Right cardiac atrium (tissue), 5 donors: ENCODE measurements at regions of chr10 and their contacts with region 1.

Region 1: GRCh38 chr10:122814493-122814892 is 31.2 kb downstream of the CUZD1 start:
- DNase-seq: no peak
- ATAC-seq: no peak
- H3K4me3 ChIP-seq: no peak overlapping the region
- H3K27ac ChIP-seq: no peak overlapping the region
- H3K4me1 ChIP-seq: no peaks in the 10 kb centered on the region
- H3K27me3 ChIP-seq: peaks cover 1% of the 10 kb centered on the region

Region 2: GRCh38 chr10:122665329-122665860 is 149.1 kb before region 1 on chr10:
- intact Hi-C with region 1: no loop called
- DNase-seq: no peak
- ATAC-seq: no peak
- H3K4me3 ChIP-seq: no peak overlapping the region
- H3K27ac ChIP-seq: no peak overlapping the region
- H3K4me1 ChIP-seq: no peaks in the 10 kb centered on the region
- H3K27me3 ChIP-seq: no peaks in the 10 kb centered on the region

Region 3: DNA sequence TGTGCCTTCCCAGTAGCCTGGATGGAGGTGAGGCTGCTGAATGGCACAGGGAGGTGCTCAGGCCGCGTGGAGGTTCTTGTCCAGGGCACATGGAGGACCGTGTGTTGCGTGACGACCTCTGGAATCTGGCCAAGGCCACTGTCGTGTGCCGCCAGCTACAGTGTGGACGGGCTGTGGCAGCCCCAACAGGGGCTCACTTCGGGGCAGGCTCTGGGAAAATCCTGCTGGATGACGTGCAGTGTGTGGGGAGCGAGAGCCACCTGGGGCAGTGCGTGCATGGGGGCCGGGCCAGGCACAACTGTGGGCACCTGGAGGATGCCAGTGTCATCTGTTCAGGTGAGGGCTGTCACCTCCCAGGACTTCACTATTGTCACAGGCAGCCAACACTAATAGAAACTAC is 64.6 kb before region 1 on chr10:
- intact Hi-C with region 1: loop called in 1 of 4 experiments (anchors 10 kb)
- DNase-seq: no peak
- ATAC-seq: no peak
- H3K4me3 ChIP-seq: no peak overlapping the region
- H3K27ac ChIP-seq: no peak overlapping the region
- H3K4me1 ChIP-seq: no peaks in the 10 kb centered on the region
- H3K27me3 ChIP-seq: no peaks in the 10 kb centered on the region